Activated B cell treated with CpG ODN at 0.5 μM for 24 hours (primary cell): ENCODE measurements at regions of chr5 and their contacts with region 1.

Region 1: GRCh38 chr5:60503771-60504170 is 196.2 kb downstream of the DEPDC1B start:
- DNase-seq: no peak
- ATAC-seq: no peak
- H3K4me3 Mint-ChIP-seq: no peak overlapping the region
- H3K27ac Mint-ChIP-seq: no peak overlapping the region
- H3K4me1 Mint-ChIP-seq: peaks cover 23% of the 10 kb centered on the region
- H3K27me3 Mint-ChIP-seq: no peaks in the 10 kb centered on the region
- CTCF ChIP-seq: no peak

Region 2: GRCh38 chr5:60522292-60522905 is 18.6 kb after region 1 on chr5:
- CTCF ChIA-PET with region 1: no interaction called
- POLR2A ChIA-PET with region 1: no interaction called
- intact Hi-C with region 1: loop called (anchors 2 kb)
- DNase-seq: no peak
- ATAC-seq: peak; percentile 78
- H3K4me3 Mint-ChIP-seq: no peak overlapping the region
- H3K27ac Mint-ChIP-seq: no peak overlapping the region
- H3K4me1 Mint-ChIP-seq: peaks cover 38% of the 10 kb centered on the region
- H3K27me3 Mint-ChIP-seq: no peaks in the 10 kb centered on the region
- CTCF ChIP-seq: no peak

Region 3: DNA sequence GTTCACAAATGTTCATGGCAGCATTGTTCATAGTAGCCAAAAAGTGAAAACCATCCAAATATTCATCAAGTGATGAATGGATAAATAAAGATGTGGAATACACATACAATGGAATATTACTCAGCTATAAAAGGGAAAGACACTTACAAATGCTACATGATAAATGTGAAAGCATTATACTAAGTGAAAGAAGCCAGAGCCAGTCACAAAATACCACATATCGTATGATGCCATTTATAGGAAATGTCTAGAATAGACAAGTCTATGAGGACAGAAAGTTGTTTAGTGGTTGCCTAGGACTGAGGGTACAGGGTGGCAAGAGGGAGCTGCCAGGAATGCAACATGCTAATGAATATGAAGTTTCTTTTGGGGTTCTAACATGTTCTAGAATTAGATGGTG is 47.5 kb after region 1 on chr5:
- CTCF ChIA-PET with region 1: no interaction called
- POLR2A ChIA-PET with region 1: no interaction called
- intact Hi-C with region 1: no loop called
- DNase-seq: no peak
- ATAC-seq: no peak
- H3K4me3 Mint-ChIP-seq: no peak overlapping the region
- H3K27ac Mint-ChIP-seq: no peak overlapping the region
- H3K4me1 Mint-ChIP-seq: peaks cover 5% of the 10 kb centered on the region
- H3K27me3 Mint-ChIP-seq: peaks cover 2% of the 10 kb centered on the region
- CTCF ChIP-seq: no peak